Endothelial cell of umbilical vein (primary cell): ENCODE measurements at regions of chrX and their contacts with region 1.

Region 1: DNA sequence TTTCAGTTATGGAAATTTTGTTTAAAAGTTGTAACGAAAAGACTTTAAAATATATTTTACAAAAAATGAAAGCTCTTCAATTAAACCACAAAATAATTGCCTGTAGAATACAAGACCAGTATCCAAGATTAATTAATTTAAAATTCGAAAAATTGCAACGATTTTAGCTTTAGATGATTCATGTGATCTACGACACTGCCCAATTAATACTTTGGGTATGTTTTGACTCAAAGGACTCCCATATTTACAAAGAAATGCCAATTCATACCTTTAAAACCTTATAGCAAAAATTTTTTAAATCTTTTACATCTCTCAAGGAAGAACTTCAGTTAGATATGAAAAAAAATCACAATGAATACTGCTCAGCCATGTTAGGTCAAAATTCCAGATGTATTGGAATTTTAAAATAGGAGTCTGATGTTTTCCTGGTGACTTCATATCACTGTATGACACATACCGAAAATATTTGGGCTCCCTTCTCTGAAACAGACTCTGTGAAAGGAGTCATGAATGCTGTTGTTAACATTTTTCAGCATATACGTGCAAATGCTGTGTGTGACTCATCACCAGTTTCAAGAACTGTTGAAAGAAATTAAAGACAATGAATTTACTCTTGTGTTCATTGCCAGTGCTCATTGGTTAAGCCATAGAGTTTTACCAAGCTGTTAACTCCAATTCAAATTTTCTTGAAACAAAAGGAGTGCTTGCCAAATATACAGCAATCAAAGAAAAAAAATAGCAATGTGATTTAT is 13.8 kb upstream of the SMS start:
- DNase-seq: peak; percentile 93
- H3K4me3 ChIP-seq: peak overlapping the region in 2 of 3 experiments; percentile 13 to 45
- H3K27ac ChIP-seq: peak overlapping the region; percentile 94
- H3K4me1 ChIP-seq: peaks cover 25% of the 10 kb centered on the region
- H3K27me3 ChIP-seq: no peaks in the 10 kb centered on the region
- CTCF ChIP-seq: no peak
- POLR2A ChIP-seq: no peak

Region 2: DNA sequence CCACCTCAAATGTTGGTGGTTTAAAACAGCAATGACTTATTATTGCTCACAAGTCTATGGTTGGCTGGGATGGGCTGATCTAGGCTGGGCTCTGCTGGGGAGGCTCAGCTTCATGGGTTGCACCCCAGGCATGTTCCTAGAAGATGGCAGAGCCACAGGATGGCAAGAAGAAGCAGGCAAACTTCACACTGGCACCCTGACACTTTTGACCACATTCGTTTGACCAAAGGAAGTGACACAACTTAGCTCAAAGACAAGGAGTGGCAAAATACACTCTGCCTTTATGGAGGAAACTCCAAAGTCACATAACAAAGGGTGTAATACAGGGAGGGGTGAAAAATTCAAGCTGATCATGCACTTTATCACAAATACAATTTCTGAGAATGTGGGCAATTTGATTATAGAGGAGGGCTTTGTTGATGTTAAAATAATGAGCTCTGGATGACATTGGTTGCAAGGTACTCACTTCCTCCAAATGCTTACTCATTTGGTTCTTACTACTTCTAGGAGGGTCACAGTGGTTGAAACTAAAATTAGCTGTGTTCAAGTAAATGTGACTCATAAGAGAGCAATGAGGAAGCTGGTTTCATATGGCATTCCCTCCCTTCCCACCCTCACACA is 1410.8 kb before region 1 on chrX:
- CTCF ChIA-PET with region 1: no interaction called
- POLR2A ChIA-PET with region 1: no interaction called
- dilution Hi-C with region 1: no loop called
- intact Hi-C with region 1: loop called (anchors 5 kb)
- DNase-seq: peak; percentile 72
- H3K4me3 ChIP-seq: no peak overlapping the region
- H3K27ac ChIP-seq: peak overlapping the region; percentile 71
- H3K4me1 ChIP-seq: peaks cover 53% of the 10 kb centered on the region
- H3K27me3 ChIP-seq: no peaks in the 10 kb centered on the region
- CTCF ChIP-seq: no peak
- POLR2A ChIP-seq: no peak

Region 3: DNA sequence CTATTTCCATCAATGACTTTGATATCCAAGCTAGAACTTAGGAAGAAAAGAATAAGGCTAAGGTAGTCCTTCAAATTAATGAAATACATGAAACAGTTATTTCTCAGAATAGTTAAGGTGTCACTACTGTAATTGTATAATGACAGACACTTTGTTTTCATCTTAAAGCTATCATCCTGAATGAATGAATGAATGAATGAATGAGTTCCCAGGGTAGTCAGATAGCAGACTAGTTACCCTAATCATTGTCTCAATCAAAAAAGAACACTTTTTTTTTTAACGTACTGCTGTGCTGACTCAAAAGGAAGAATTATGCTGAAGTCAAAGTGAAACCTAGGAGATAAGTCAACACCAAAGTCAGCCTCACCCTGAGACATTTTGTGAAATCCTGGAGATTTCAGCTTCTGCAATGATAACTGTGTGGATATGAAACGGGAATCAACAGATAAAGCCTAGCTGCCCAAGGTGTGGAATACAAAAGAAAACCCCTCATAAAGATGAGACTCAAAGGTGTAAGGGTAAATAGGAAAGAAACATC is 620.8 kb before region 1 on chrX:
- CTCF ChIA-PET with region 1: no interaction called
- POLR2A ChIA-PET with region 1: no interaction called
- dilution Hi-C with region 1: no loop called
- intact Hi-C with region 1: no loop called
- DNase-seq: no peak
- H3K4me3 ChIP-seq: no peak overlapping the region
- H3K27ac ChIP-seq: no peak overlapping the region
- H3K4me1 ChIP-seq: no peaks in the 10 kb centered on the region
- H3K27me3 ChIP-seq: no peaks in the 10 kb centered on the region
- CTCF ChIP-seq: no peak
- POLR2A ChIP-seq: no peak

Region 4: DNA sequence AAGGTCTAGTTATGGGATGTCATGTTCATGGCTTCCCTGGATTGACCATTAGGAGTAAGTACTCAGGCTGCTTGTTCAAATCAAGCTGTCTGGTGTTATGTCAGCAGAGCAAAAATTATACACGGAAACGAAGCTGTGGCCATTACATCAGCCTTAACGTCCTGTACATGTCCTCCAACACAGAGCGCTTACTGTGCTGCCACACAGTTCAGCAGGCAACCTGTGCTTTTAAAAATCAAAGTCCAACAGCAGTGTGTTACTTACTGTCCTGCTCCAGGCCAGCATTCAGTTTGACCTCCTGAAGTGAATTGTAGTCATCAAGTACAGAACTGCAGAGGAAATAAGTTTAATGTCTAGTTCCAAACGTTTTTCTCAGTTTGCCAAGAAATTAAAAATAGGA is 314.5 kb before region 1 on chrX:
- CTCF ChIA-PET with region 1: no interaction called
- POLR2A ChIA-PET with region 1: no interaction called
- dilution Hi-C with region 1: no loop called
- intact Hi-C with region 1: no loop called
- DNase-seq: peak; percentile 1
- H3K4me3 ChIP-seq: no peak overlapping the region
- H3K27ac ChIP-seq: no peak overlapping the region
- H3K4me1 ChIP-seq: no peaks in the 10 kb centered on the region
- H3K27me3 ChIP-seq: no peaks in the 10 kb centered on the region
- CTCF ChIP-seq: no peak
- POLR2A ChIP-seq: no peak

Region 5: GRCh38 chrX:21870494-21870893 is 56.2 kb before region 1 on chrX:
- CTCF ChIA-PET with region 1: no interaction called
- POLR2A ChIA-PET with region 1: no interaction called
- dilution Hi-C with region 1: no loop called
- intact Hi-C with region 1: loop called (anchors 5 kb)
- DNase-seq: no peak
- H3K4me3 ChIP-seq: no peak overlapping the region
- H3K27ac ChIP-seq: no peak overlapping the region
- H3K4me1 ChIP-seq: peaks cover 14% of the 10 kb centered on the region
- H3K27me3 ChIP-seq: no peaks in the 10 kb centered on the region
- CTCF ChIP-seq: no peak
- POLR2A ChIP-seq: no peak

Region 6: GRCh38 chrX:21940356-21940829 is 13.7 kb after region 1 on chrX and contains the start of gene SMS:
- CTCF ChIA-PET with region 1: no interaction called
- POLR2A ChIA-PET with region 1: no interaction called
- dilution Hi-C with region 1: no loop called
- intact Hi-C with region 1: loop called (anchors 1 kb)
- DNase-seq: peak; percentile 66
- H3K4me3 ChIP-seq: peak within 1 kb of the TSS; percentile 59 to 71 (median 71)
- H3K27ac ChIP-seq: peak within 1 kb of the TSS; percentile 84
- H3K4me1 ChIP-seq: peaks cover 35% of the 10 kb centered on the region
- H3K27me3 ChIP-seq: no peaks in the 10 kb centered on the region
- CTCF ChIP-seq: no peak
- POLR2A ChIP-seq: peak; percentile 61
- total RNA-seq, gene SMS: 173 and 177 TPM in 2 replicates